Natural killer cell (primary cell): ENCODE measurements at regions of chr5 and their contacts with region 1.

Region 1: GRCh38 chr5:131382407-131383395 is 118.8 kb downstream of the CDC42SE2 start:
- DNase-seq: peak; percentile 30 to 90
- ATAC-seq: peak; percentile 68 to 89 (median 78)
- H3K4me3 ChIP-seq: no peak overlapping the region
- H3K4me3 Mint-ChIP-seq: peak overlapping the region; percentile 60
- H3K27ac ChIP-seq: peak overlapping the region; percentile 99
- H3K27ac Mint-ChIP-seq: peak overlapping the region; percentile 89 to 95
- H3K4me1 ChIP-seq: peaks cover 46% of the 10 kb centered on the region
- H3K4me1 Mint-ChIP-seq: peaks cover 65 to 66% of the 10 kb centered on the region in 2 donors
- H3K27me3 ChIP-seq: no peaks in the 10 kb centered on the region
- H3K27me3 Mint-ChIP-seq: no peaks in the 10 kb centered on the region
- CTCF ChIP-seq: peak; percentile 74

Region 2: DNA sequence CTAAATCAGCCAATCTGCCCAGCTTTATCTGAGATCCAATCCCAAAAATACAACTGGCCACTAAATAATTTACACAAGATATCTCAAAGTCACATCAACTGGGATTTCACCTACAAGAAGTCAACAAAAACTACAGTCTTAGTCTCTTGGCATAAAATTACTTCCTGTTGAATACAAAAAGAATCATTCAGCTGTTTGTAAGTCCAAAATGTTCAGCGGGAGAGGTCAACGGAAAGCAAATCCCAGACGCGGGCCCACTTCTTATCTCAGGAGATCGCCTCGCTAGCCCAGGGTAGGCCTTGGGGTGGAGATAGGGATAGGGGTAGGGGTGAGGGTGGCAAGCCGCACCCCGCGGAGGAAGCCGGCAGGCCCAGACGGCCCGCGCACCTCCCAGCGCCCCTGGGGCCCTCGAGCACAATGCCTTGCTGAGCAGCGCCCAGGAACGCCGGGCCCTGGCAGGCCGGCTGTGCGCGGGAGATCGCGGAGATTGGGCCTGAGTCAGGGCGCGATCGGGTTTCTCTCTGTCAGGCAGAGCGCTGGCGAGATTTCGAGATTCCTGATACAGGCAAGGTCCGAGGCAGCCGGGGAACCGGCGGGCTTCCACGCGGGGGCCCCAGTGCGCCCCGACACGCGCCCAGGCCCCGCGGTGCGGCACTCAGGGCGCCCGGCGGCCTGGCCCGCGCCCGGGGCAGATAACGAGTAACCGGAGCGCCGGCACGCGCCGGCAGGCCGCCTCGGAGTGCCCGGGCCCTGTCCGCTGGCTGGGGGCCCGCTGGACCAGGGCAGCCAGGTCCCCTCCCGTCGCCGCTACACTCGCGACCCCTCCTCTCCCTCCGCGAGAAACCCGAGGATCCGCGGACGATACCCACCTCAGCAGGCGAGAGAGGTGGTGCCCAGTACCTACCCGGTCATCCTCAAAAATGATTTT is 218.2 kb before region 1 on chr5:
- intact Hi-C with region 1: loop called (anchors 1 kb)
- DNase-seq: peak; percentile 68 to 82
- ATAC-seq: peak; percentile 67 to 83 (median 79)
- H3K4me3 ChIP-seq: peak overlapping the region; percentile 82
- H3K4me3 Mint-ChIP-seq: peak overlapping the region; percentile 95
- H3K27ac ChIP-seq: peak overlapping the region; percentile 91
- H3K27ac Mint-ChIP-seq: peak overlapping the region; percentile 92 to 93
- H3K4me1 ChIP-seq: peaks cover 8% of the 10 kb centered on the region
- H3K4me1 Mint-ChIP-seq: peaks cover 28 to 35% of the 10 kb centered on the region in 2 donors
- H3K27me3 ChIP-seq: no peaks in the 10 kb centered on the region
- H3K27me3 Mint-ChIP-seq: no peaks in the 10 kb centered on the region
- CTCF ChIP-seq: no peak

Region 3: GRCh38 chr5:131252824-131253171 is 129.9 kb before region 1 on chr5:
- intact Hi-C with region 1: loop called (anchors 1 kb)
- DNase-seq: peak; percentile 69 to 94
- ATAC-seq: peak; percentile 72 to 89 (median 88)
- H3K4me3 ChIP-seq: peak overlapping the region; percentile 47
- H3K4me3 Mint-ChIP-seq: peak overlapping the region; percentile 91
- H3K27ac ChIP-seq: peak overlapping the region; percentile 99
- H3K27ac Mint-ChIP-seq: peak overlapping the region; percentile 91 to 93
- H3K4me1 ChIP-seq: peaks cover 55% of the 10 kb centered on the region
- H3K4me1 Mint-ChIP-seq: peaks cover 54 to 58% of the 10 kb centered on the region in 2 donors
- H3K27me3 ChIP-seq: no peaks in the 10 kb centered on the region
- H3K27me3 Mint-ChIP-seq: no peaks in the 10 kb centered on the region
- CTCF ChIP-seq: no peak

Region 4: DNA sequence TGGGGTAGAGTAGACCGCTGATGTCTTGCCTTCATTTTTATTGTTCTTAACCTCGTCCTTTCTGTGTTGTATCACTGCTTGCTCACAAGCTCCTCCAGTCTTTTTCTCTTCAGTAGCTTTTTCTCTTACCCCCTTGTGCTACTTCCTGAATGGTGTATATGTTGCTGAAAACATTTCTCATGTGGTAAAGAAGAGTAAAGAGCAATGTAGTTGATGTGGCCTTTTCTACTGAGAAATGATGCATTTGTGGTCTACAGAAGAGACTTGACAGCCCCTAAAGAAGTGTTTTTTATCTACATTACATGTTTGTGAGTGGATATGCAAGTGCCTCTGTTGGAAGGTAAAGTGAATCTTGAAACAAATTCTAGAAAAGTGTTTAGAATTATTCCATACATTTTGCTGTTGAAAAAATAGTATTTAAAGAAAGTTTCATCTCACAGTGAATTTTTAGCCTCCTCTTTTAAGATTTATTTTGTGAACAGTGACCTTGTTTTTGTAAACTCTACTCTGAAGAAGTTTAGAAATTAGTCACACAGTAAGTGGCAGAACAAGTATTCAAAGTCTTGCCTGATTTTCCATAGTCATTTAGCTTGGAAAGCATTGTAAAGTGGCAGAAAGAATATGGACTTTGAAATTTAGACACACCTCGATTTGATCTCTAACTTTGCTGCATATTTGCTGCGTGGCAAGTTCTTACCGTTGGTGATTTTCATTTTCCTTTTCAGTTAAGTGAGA is 101.4 kb before region 1 on chr5:
- intact Hi-C with region 1: loop called (anchors 1 kb)
- DNase-seq: peak in 1 of 2 donors; percentile 86
- ATAC-seq: peak; percentile 70 to 88 (median 86)
- H3K4me3 ChIP-seq: peak overlapping the region; percentile 42
- H3K4me3 Mint-ChIP-seq: peak overlapping the region; percentile 81
- H3K27ac ChIP-seq: peak overlapping the region; percentile 89
- H3K27ac Mint-ChIP-seq: peak overlapping the region; percentile 82 to 93
- H3K4me1 ChIP-seq: peaks cover 54% of the 10 kb centered on the region
- H3K4me1 Mint-ChIP-seq: peaks cover 73 to 77% of the 10 kb centered on the region in 2 donors
- H3K27me3 ChIP-seq: no peaks in the 10 kb centered on the region
- H3K27me3 Mint-ChIP-seq: no peaks in the 10 kb centered on the region
- CTCF ChIP-seq: no peak

Region 5: DNA sequence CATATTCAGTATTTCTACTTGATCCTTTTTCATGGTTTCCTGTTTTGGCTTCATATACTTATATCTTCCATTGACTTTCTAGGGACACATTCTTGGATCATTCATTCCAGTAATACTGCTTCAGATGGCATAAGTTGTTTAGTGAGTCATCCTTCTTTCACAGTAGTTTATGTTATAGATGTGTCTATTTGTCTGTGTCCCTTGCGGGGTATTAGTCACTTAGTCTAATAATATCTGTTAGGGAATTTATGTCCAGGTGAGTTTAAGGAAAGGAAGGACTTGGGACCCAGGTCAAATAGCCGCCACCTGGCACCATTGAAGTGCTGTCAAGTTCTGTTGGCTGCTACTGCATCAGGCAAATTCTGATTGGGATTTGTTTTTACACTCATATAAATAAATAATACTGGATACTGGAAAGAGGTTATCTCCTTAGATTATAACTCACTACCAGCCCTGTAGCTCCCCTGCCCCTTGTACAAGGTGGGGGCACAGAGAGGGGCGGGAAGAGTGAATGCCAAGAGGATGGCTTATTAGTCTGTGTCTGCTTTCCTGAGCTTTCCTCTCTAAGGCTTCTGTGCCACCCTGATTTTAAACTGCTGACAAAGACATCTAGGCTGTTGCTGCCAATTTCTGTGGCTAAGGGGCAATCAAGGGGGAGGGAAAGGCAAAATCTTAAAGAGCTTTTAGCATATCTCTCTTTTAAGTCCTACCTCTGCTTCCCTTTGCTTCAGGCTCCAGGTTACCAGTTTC is 54.0 kb before region 1 on chr5:
- intact Hi-C with region 1: loop called (anchors 10 kb)
- DNase-seq: no peak
- ATAC-seq: peak in 1 of 3 donors; percentile 50
- H3K4me3 ChIP-seq: no peak overlapping the region
- H3K4me3 Mint-ChIP-seq: peak overlapping the region; percentile 36
- H3K27ac ChIP-seq: no peak overlapping the region
- H3K27ac Mint-ChIP-seq: peak overlapping the region; percentile 66 to 70
- H3K4me1 ChIP-seq: peaks cover 17% of the 10 kb centered on the region
- H3K4me1 Mint-ChIP-seq: peaks cover 72 to 75% of the 10 kb centered on the region in 2 donors
- H3K27me3 ChIP-seq: no peaks in the 10 kb centered on the region
- H3K27me3 Mint-ChIP-seq: no peaks in the 10 kb centered on the region
- CTCF ChIP-seq: no peak